Body of pancreas (tissue), 4 donors: ENCODE measurements at regions of chr12 and their contacts with region 1.

Region 1: GRCh38 chr12:105226219-105226618 is 9.8 kb downstream of the APPL2 start:
- DNase-seq: peak; percentile 51 to 78 (median 70)
- ATAC-seq: peak; percentile 73
- H3K4me3 ChIP-seq: no peak overlapping the region
- H3K27ac ChIP-seq: peak overlapping the region in 2 of 4 donors; percentile 52 to 57
- H3K4me1 ChIP-seq: peaks cover 25% of the 10 kb centered on the region
- H3K27me3 ChIP-seq: no peaks in the 10 kb centered on the region
- CTCF ChIP-seq: peak in 2 of 7 experiments; percentile 8 to 16
- POLR2A ChIP-seq: no peak

Region 2: GRCh38 chr12:104846056-104846767 is 380.0 kb before region 1 on chr12:
- intact Hi-C with region 1: no loop called
- DNase-seq: no peak
- ATAC-seq: no peak
- H3K4me3 ChIP-seq: no peak overlapping the region
- H3K27ac ChIP-seq: no peak overlapping the region
- H3K4me1 ChIP-seq: peaks cover 12% of the 10 kb centered on the region
- H3K27me3 ChIP-seq: no peaks in the 10 kb centered on the region
- CTCF ChIP-seq: no peak
- POLR2A ChIP-seq: no peak

Region 3: DNA sequence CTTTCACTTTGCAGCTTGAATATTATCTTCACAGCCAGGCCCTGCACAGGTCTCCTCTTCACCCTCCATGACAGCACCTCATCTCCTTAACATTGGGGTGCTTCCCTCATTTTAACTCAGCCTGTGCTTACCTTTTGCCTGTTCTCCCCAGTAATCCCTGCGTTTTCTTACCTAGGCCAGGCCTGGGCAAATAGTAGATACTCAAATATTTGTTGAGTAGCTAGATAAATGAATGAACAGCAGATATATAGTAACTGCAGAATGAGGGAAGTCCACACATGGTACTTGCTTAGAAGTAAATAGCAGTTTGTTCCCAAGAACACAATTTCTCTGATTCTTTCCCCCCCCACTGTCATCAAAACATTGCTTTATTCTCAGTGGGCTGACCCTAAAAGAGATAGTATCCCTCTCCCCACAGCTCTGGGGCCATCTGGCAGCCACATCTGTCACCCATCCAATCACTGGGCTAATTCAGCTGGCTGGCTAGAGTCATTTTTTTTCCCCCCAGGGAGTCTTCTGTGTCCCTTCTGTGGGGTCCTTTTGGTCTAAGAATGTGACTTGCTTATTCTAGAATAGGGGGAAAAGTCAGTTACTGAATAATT is 33.5 kb before region 1 on chr12:
- intact Hi-C with region 1: no loop called
- DNase-seq: no peak
- ATAC-seq: no peak
- H3K4me3 ChIP-seq: no peak overlapping the region
- H3K27ac ChIP-seq: no peak overlapping the region
- H3K4me1 ChIP-seq: no peaks in the 10 kb centered on the region
- H3K27me3 ChIP-seq: no peaks in the 10 kb centered on the region
- CTCF ChIP-seq: no peak
- POLR2A ChIP-seq: no peak

Region 4: GRCh38 chr12:105341010-105341409 is 114.8 kb after region 1 on chr12:
- intact Hi-C with region 1: loop called (anchors 10 kb)
- DNase-seq: no peak
- ATAC-seq: no peak
- H3K4me3 ChIP-seq: no peak overlapping the region
- H3K27ac ChIP-seq: no peak overlapping the region
- H3K4me1 ChIP-seq: no peaks in the 10 kb centered on the region
- H3K27me3 ChIP-seq: no peaks in the 10 kb centered on the region
- CTCF ChIP-seq: no peak
- POLR2A ChIP-seq: no peak

Region 5: DNA sequence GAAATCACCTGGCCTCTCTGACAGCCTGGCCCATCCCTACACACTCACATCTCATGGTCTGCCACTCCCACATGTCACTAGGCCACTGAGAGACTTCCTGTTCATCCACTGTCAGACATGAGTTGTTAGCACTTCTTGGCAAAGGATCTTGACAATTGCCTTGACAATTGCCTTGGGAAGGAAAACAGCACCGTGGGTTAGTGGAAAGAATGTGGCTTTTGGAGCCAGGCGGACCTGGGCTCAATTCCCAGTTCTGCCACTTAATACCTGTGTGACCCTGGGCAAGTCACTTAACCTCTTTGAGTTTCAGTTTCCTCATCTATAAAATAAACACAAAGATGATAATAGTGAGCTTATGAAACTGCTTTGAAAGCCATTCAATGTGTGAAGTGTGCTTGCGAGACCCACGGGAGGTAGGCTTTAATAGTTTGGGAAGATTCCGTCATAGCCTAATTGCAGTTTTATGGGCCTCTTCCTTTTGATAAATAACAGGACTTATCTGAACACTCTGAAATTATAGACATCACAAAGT is 354.7 kb after region 1 on chr12:
- intact Hi-C with region 1: no loop called
- DNase-seq: peak in 1 of 4 donors; percentile 3
- ATAC-seq: peak; percentile 47
- H3K4me3 ChIP-seq: no peak overlapping the region
- H3K27ac ChIP-seq: no peak overlapping the region
- H3K4me1 ChIP-seq: no peaks in the 10 kb centered on the region
- H3K27me3 ChIP-seq: no peaks in the 10 kb centered on the region
- CTCF ChIP-seq: no peak
- POLR2A ChIP-seq: no peak